ENCODE measurements at regions of chr15 and their contacts with region 1.

Region 1: GRCh38 chr15:78872972-78873792 is 492 bp downstream of the MORF4L1 start:
- DNase-seq: peak; percentile 81
- ATAC-seq: peak; percentile 72
- H3K4me3 Mint-ChIP-seq: peak overlapping the region; percentile 98
- H3K27ac Mint-ChIP-seq: peak overlapping the region; percentile 100
- H3K4me1 Mint-ChIP-seq: peaks cover 39% of the 10 kb centered on the region
- H3K27me3 Mint-ChIP-seq: no peaks in the 10 kb centered on the region
- CTCF ChIP-seq: no peak

Region 2: GRCh38 chr15:78540141-78540928 is 332.8 kb before region 1 on chr15 and contains the start of gene PSMA4:
- CTCF ChIA-PET with region 1: no interaction called
- POLR2A ChIA-PET with region 1: interaction called, 15 read pairs
- intact Hi-C with region 1: loop called (anchors 5 kb)
- DNase-seq: peak; percentile 97
- ATAC-seq: peak; percentile 87
- H3K4me3 Mint-ChIP-seq: peak within 1 kb of the TSS; percentile 98
- H3K27ac Mint-ChIP-seq: peak within 1 kb of the TSS; percentile 99
- H3K4me1 Mint-ChIP-seq: peaks cover 24% of the 10 kb centered on the region
- H3K27me3 Mint-ChIP-seq: no peaks in the 10 kb centered on the region
- CTCF ChIP-seq: no peak
- total RNA-seq, gene PSMA4: 178 and 182 TPM in 2 replicates

Region 3: GRCh38 chr15:78654272-78654671 is 218.9 kb before region 1 on chr15:
- CTCF ChIA-PET with region 1: no interaction called
- POLR2A ChIA-PET with region 1: no interaction called
- intact Hi-C with region 1: no loop called
- DNase-seq: no peak
- ATAC-seq: no peak
- H3K4me3 Mint-ChIP-seq: no peak overlapping the region
- H3K27ac Mint-ChIP-seq: no peak overlapping the region
- H3K4me1 Mint-ChIP-seq: no peaks in the 10 kb centered on the region
- H3K27me3 Mint-ChIP-seq: peaks cover 5% of the 10 kb centered on the region
- CTCF ChIP-seq: no peak

Region 4: GRCh38 chr15:78811124-78811824 is 61.9 kb before region 1 on chr15 and contains the start of gene ADAMTS7:
- CTCF ChIA-PET with region 1: interaction called, 4 read pairs
- POLR2A ChIA-PET with region 1: interaction called, 10 read pairs
- intact Hi-C with region 1: no loop called
- DNase-seq: peak; percentile 65
- ATAC-seq: peak; percentile 92
- H3K4me3 Mint-ChIP-seq: peak within 1 kb of the TSS; percentile 85
- H3K27ac Mint-ChIP-seq: no peak within 1 kb of the TSS
- H3K4me1 Mint-ChIP-seq: peaks cover 15% of the 10 kb centered on the region
- H3K27me3 Mint-ChIP-seq: peaks cover 25% of the 10 kb centered on the region
- CTCF ChIP-seq: no peak
- total RNA-seq, gene ADAMTS7: 12.0 and 14.1 TPM in 2 replicates

Region 5: GRCh38 chr15:78922527-78923414 is 49.6 kb after region 1 on chr15:
- CTCF ChIA-PET with region 1: no interaction called
- POLR2A ChIA-PET with region 1: interaction called, 12 read pairs
- intact Hi-C with region 1: no loop called
- DNase-seq: no peak
- ATAC-seq: peak; percentile 49
- H3K4me3 Mint-ChIP-seq: no peak overlapping the region
- H3K27ac Mint-ChIP-seq: peak overlapping the region; percentile 61
- H3K4me1 Mint-ChIP-seq: peaks cover 13% of the 10 kb centered on the region
- H3K27me3 Mint-ChIP-seq: no peaks in the 10 kb centered on the region
- CTCF ChIP-seq: no peak

Region 6: DNA sequence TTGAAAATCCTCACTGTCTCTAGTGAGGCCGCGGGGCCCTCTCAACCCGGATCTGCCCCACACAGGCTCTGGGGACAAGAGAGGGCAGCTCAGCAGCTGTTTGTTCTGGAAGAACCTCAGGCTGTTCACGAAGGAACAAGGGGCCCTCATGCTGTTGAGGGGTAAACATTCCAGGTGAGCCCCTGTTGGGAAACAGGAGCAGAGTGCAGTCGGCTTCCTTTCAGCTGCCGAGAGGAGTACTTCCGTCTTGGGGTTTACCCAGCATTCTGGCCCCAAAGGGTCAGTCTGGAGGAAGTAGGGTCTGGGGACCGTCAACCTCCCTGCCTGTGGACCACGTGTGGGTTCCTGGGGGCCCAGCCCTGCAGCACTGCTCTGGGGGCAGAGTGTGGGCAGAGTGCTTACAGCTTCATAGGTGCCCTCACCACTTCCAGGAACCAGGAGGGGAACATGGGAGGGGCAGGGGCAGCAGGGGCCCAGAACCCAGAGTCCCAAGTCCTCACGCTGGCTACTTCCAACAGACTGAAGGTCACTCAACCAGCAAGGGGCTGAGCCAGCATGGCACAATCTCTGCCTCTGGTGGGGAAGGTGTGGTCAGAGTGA is 120.8 kb after region 1 on chr15:
- CTCF ChIA-PET with region 1: no interaction called
- POLR2A ChIA-PET with region 1: interaction called, 10 read pairs
- intact Hi-C with region 1: no loop called
- DNase-seq: no peak
- ATAC-seq: no peak
- H3K4me3 Mint-ChIP-seq: no peak overlapping the region
- H3K27ac Mint-ChIP-seq: no peak overlapping the region
- H3K4me1 Mint-ChIP-seq: peaks cover 14% of the 10 kb centered on the region
- H3K27me3 Mint-ChIP-seq: no peaks in the 10 kb centered on the region
- CTCF ChIP-seq: no peak